Esophagus squamous epithelium (tissue), 5 donors: ENCODE measurements at regions of chr7 and their contacts with region 1.

Region 1: DNA sequence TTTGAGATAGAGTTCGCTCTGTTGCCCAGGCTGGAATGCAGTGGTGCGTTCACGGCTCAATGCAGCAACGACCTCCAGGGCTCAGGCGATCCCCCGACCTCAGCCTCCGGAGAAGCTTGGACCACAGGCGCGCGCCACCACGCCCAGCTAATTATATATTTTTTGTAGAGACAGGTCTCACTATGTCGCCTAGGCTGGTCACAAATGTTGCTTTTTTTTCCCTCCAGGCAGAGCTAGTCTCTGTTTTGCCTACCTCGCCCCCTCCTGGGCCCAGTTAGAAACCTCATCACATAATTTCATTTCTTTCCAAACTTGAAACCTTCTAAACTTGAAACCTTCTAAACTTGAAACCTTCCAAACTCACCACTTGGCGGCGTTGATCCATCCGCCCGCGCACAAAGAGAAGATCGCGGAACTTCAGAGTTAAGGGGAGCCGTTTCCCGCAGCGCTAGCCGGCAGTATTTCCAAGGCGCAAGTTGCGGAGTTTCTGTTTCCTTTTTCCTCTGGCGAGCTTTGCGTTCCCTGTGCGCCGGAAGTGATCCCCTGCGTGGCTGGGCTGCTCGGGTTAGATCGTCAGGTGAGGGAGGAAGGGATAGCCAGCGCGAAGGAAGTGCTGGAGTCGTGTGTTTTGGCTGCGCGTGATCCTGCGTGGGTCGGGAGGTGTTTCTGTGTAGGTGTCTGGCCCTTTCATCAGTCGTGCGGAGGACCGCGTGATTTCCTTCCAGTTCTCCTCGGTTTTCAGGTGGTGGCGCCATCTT is at the start of gene SSBP1:
- DNase-seq: peak; percentile 55
- H3K4me3 ChIP-seq: peak within 1 kb of the TSS; percentile 58 to 87 (median 76)
- H3K27ac ChIP-seq: peak within 1 kb of the TSS; percentile 85 to 91 (median 88)
- H3K4me1 ChIP-seq: peaks cover 6 to 37% (median 13%) of the 10 kb centered on the region in 3 donors
- H3K27me3 ChIP-seq: no peaks in the 10 kb centered on the region
- CTCF ChIP-seq: peak; percentile 58 to 99 (median 84)
- POLR2A ChIP-seq: peak in 3 of 4 donors; percentile 23 to 59 (median 29)
- total RNA-seq, gene SSBP1: 120 to 187 (median 146) TPM

Region 2: DNA sequence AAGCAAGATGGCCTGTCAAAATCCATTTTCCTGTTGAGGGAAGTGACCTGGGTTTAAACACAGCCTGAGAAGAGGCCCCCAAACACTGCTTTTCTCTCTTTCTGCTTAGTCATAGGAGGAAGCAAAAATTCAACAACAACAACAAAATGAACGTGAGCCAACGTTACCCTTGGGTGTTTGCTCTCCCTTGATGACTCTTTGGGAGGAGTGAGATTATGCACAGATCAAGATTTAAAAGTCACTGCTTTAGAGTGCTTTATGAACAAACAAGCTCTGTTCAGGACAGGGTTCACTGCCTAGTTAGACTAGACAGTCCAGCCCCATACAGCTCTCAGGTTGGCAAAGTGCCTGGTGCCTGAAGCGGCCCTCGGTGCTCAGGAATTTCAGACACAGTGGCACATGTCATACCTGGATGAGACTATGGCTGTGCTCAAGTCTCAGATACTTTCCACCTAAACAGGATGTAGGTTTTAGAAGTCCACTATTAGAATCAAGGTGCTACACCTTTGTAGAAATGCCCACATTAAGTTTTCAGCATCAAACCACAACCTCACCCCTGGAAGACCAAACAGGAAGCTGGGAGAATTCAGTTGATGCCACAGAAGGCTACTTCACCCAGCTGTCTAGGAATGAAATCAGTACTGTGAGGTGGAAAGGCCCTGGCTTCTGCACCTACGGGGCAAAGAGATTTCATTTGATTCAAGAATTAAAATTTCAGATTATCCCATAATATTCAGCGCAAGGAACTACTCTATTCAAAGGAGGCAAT is 74.7 kb before region 1 on chr7:
- intact Hi-C with region 1: loop called (anchors 10 kb)
- DNase-seq: no peak
- H3K4me3 ChIP-seq: no peak overlapping the region
- H3K27ac ChIP-seq: peak overlapping the region; percentile 36 to 70 (median 60)
- H3K4me1 ChIP-seq: peaks cover 0 to 43% (median 11%) of the 10 kb centered on the region in 3 donors
- H3K27me3 ChIP-seq: no peaks in the 10 kb centered on the region
- CTCF ChIP-seq: no peak
- POLR2A ChIP-seq: no peak